Endothelial cell of umbilical vein (primary cell): ENCODE measurements at regions of chr19 and their contacts with region 1.

Region 1: DNA sequence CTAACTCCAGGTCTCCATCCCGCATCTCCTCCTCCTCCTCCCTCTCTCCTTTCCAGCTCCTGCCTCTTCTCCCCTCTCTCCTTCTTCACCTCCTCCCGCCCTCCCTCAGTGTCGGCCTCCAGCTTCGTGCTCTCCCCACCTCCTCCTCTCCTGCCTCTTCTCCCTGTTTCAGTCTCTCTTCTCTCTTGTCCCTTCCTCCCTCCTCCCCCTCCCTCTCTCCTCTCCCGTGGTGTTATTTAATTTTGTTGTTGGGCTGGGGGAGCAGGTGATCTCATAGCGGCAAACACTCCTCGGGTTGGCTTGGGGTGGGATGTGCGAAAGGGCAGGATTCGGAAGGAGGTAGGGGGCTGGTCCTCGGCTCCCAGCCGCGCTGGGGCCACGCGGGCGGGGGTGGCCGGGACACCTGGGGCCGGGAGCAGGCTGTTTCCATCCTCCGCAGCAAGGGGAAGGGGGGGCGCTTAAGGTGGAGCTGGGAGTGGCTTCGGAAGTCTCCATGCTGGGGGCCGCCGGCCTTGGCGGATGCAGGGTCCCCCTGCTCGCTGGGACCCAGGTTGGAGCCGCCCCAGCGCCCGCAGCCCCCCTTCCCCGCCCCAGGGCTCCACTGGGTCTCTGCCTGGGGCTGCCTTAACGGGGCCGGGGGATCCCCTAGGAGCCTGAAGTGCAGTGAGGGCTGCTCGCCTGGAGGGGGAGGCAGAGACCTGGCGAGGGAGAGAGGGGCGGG is at the start of gene CA11:
- DNase-seq: peak; percentile 84
- H3K4me3 ChIP-seq: peak within 1 kb of the TSS; percentile 40 to 46 (median 46)
- H3K27ac ChIP-seq: no peak within 1 kb of the TSS
- H3K4me1 ChIP-seq: peaks cover 9% of the 10 kb centered on the region
- H3K27me3 ChIP-seq: peaks cover 0 to 2% of the 10 kb centered on the region in 2 experiments
- CTCF ChIP-seq: peak; percentile 68 to 89
- POLR2A ChIP-seq: no peak
- total RNA-seq, gene CA11: 2.8 TPM in 2 replicates

Region 2: DNA sequence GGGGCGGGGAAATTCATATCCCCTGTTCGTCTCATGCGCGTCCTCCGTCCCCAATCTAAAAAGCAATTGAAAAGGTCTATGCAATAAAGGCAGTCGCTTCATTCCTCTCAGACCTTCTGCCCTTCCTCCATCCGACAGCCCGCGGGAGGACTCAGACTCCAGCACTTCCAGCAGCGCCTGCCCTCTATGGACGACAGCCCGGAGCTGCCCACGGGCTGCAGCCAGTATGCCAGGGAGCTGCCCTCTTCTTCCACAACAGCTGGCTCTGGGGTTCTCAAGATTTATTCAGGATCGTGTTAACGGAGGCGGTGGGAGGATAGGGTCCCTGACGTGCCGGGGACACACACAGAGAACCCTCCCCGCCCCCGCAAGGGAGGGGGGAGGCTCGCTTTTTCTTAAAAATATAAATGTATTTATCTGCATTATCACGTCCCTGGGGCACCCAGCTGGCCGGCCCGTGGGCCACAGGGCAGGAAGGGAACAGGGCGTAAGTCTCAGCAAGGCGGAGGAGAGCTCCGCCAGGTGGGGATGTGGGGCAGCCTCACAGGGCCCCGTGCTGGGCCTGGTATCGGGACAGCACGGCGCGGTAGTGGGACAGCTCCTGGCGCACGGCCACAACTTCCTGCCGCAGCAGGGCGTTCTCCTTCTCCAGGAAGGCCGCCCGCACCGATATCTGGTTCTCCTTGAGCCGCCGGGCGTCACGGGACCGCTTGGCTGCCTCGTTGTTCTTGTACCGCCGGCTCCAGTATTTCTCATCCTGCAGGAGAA is 15.7 kb before region 1 on chr19:
- CTCF ChIA-PET with region 1: interaction called, 11 read pairs
- POLR2A ChIA-PET with region 1: no interaction called
- dilution Hi-C with region 1: no loop called
- intact Hi-C with region 1: no loop called
- DNase-seq: peak; percentile 70
- H3K4me3 ChIP-seq: peak overlapping the region; percentile 6 to 19 (median 17)
- H3K27ac ChIP-seq: peak overlapping the region; percentile 13
- H3K4me1 ChIP-seq: peaks cover 25% of the 10 kb centered on the region
- H3K27me3 ChIP-seq: no peaks in the 10 kb centered on the region
- CTCF ChIP-seq: peak in 1 of 2 donors; percentile 33
- POLR2A ChIP-seq: peak; percentile 53

Region 3: DNA sequence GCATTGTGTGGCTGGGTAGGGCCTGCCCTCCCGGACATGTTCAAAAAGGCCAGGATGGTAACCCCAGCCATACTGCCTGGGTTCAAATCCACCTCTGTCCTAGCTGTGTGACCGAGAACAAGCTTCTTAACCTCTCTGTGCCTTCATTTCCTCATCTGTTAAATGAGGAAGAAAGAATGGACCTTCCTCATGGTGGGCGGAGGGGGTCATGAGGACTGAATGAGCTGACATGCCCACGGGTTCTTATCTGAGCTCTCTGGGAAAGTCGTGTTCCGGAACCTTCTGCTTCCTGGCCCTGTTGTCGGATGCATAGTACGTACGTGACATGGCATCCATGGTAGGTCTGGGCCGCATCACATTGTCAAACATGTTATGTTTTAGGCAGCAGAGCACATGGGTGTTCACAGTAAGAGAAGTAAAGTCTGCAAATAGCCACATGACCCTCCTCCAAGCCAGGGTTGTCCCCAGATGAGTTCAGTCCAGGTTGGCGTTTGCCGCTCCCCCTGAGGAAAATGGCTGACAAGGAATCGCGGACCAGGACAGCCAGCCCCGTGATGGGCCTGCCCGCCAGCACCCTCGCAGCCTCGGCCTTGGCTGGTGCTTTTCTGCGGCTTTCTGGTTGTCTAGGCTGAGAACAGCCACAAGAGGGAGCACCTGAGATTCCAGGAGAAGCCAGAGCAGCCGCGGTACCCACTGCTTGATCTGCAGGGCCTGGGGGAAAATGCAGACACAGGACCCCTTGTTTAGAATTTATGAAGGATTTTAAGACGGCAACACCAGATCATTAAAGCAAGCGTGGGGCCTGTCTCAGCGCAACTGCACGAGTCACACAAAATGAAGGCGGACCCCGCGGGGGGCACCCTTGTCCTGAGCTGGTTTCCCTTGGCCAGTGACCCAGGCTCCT is 29.0 kb after region 1 on chr19:
- CTCF ChIA-PET with region 1: interaction called, 41 read pairs
- POLR2A ChIA-PET with region 1: interaction called, 3 read pairs
- dilution Hi-C with region 1: no loop called
- intact Hi-C with region 1: loop called (anchors 1 kb)
- DNase-seq: peak; percentile 88
- H3K4me3 ChIP-seq: no peak overlapping the region
- H3K27ac ChIP-seq: no peak overlapping the region
- H3K4me1 ChIP-seq: no peaks in the 10 kb centered on the region
- H3K27me3 ChIP-seq: no peaks in the 10 kb centered on the region
- CTCF ChIP-seq: peak; percentile 86 to 92
- POLR2A ChIP-seq: no peak

Region 4: DNA sequence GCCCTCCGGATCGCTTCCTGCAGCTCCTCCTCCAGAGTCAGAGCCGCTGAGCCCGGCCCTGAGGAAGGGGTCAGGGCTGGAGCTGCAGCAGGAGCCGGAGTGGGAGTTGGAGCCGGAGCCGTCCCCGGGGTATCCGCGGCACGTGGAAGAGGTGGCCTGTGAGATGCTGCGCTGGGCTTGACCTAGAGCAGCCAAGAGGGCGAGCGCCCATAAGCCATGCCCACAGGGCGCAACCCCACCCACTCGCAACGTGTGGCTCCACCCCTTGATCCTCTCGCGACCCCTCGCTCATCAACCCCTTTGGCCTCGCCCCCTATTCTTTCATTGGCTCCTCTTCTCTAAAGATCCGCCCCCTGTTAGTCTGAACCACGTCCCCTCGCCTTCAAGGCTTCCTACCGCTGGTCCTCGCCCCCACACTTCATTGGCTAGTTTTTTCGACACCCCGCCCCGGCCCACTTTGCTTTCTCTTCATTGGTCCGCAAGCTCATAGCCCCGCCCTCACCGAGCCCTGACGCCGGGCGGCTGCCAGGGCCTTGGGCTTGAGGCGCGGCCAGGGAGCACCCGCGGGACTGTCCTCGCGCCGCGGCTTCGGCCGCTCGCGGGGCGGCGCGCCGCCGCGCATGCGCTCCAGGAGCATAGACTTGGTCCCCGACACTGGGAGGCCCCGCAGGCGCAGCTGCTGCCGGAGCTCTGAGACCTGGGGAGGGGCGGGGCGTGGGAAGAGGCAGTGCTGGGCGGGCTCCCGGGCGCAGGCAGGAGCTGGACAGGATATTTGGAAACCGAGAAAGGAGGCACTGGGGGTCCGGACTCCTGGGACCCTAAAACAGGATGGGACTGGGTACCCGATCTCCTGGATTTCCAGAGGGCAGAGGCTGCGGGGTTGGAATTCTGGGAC is 68.0 kb after region 1 on chr19:
- CTCF ChIA-PET with region 1: interaction called, 12 read pairs
- POLR2A ChIA-PET with region 1: no interaction called
- dilution Hi-C with region 1: no loop called
- intact Hi-C with region 1: loop called (anchors 1 kb)
- DNase-seq: peak; percentile 100
- H3K4me3 ChIP-seq: peak overlapping the region; percentile 37 to 63 (median 50)
- H3K27ac ChIP-seq: peak overlapping the region; percentile 52
- H3K4me1 ChIP-seq: peaks cover 15% of the 10 kb centered on the region
- H3K27me3 ChIP-seq: no peaks in the 10 kb centered on the region
- CTCF ChIP-seq: no peak
- POLR2A ChIP-seq: no peak

Region 5: GRCh38 chr19:48738557-48739399 is 92.6 kb after region 1 on chr19:
- CTCF ChIA-PET with region 1: interaction called, 15 read pairs
- POLR2A ChIA-PET with region 1: no interaction called
- dilution Hi-C with region 1: no loop called
- intact Hi-C with region 1: loop called (anchors 2 kb)
- DNase-seq: peak; percentile 94
- H3K4me3 ChIP-seq: peak overlapping the region; percentile 73 to 80 (median 77)
- H3K27ac ChIP-seq: peak overlapping the region; percentile 8
- H3K4me1 ChIP-seq: peaks cover 24% of the 10 kb centered on the region
- H3K27me3 ChIP-seq: no peaks in the 10 kb centered on the region
- CTCF ChIP-seq: peak; percentile 29 to 30
- POLR2A ChIP-seq: no peak

Region 6: DNA sequence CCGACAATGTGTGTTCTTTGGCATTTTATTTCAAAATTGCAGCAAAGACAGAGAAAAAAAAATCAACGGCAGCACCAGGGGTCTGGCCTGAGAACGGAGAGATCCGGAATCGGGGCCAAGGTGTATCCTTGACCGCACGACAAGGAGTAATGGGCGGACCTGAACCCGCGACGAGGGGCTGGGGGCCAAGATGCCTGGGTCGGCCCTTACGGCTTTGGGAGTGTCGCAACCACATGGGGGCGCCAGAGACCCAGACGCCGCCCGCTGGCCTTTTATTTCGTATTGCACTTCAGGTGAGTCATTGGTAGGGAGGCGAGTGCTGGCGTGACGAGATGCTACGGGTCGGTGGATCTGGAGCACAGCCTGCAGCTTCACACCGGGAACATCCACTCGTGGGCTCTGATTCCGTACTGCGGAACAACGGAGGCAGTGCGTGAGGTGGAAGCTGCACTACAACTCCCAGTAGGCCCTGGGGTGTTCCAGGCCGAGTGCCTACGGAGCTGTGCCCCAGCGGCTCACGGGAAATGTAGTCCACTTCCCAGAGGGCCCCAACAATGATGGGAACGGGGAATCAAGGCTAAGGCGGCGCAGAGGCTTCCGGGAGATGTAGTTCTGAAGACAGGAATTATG is 149.0 kb after region 1 on chr19:
- CTCF ChIA-PET with region 1: interaction called, 18 read pairs
- POLR2A ChIA-PET with region 1: no interaction called
- dilution Hi-C with region 1: no loop called
- intact Hi-C with region 1: no loop called
- DNase-seq: peak; percentile 95
- H3K4me3 ChIP-seq: peak overlapping the region in 2 of 3 experiments; percentile 18 to 37
- H3K27ac ChIP-seq: peak overlapping the region; percentile 2
- H3K4me1 ChIP-seq: peaks cover 3% of the 10 kb centered on the region
- H3K27me3 ChIP-seq: no peaks in the 10 kb centered on the region
- CTCF ChIP-seq: peak; percentile 94 to 96
- POLR2A ChIP-seq: peak; percentile 48

Region 7: DNA sequence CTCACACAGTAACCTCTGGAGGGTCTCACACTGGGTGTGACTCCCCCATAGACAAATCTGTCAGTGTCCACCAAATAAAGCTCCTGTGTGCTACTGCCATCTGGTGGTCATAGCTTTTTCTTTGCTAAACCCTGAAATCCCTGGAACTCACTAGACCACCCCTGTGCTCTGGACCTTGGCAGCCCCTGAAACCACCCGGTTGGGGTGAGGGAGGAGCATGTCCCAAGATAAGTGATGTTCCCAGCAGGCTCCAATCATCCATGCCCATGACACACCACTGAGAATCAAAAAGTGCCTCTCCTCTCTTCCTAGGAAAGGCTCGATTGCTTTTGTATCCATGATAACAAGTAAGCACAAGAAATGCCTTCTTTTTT is 196.6 kb after region 1 on chr19:
- CTCF ChIA-PET with region 1: interaction called, 31 read pairs
- POLR2A ChIA-PET with region 1: no interaction called
- dilution Hi-C with region 1: no loop called
- intact Hi-C with region 1: loop called (anchors 1 kb)
- DNase-seq: peak; percentile 62
- H3K4me3 ChIP-seq: no peak overlapping the region
- H3K27ac ChIP-seq: no peak overlapping the region
- H3K4me1 ChIP-seq: no peaks in the 10 kb centered on the region
- H3K27me3 ChIP-seq: no peaks in the 10 kb centered on the region
- CTCF ChIP-seq: peak; percentile 73 to 79
- POLR2A ChIP-seq: no peak